HepG2 (cell line): ENCODE measurements at regions of chr15 and their contacts with region 1.

Region 1: DNA sequence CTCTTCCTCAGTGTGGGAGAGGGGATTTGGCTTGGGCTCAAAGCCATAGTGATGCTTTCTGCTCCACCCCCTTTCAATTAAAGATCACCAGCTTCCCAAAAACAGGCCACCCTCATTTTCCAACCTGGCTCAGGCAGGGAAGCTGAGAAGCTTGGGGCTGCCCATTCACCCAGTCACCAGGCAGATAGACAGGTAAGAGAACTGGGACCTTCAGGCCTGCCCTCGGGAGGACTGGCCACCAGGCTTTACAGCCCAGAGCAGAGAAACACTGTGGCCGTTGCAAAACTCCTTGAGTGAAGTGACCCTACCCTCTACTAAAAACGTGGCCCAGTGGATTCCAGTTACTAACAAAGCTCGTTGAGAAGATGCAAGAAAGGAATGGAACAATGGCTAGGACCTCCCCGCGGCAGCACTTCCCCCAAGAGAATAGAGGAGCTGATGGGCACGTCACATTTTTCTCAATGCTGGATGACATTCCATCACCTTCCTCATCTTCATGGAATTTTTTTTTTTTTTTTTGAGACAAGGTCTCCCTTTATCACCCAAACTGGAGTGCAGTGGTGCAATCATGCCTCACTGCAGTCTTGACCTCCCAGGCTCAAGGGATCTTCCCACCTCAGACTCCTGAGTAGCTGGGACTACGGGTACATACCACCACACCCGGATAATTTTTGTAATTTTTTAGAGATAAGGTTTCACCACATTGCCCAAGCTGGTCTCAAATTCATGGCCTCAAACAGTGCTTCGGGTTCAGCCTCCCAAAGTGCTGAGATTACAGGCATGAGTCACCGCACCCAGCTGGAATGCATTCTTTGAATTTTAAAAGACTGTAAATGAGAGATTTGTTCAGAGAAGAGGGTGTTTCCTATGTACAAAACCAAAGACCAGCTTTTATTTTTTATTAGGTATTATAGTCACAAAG is 37.9 kb downstream of the LIPC start:
- DNase-seq: peak; percentile 90
- ATAC-seq: peak; percentile 39
- H3K4me3 ChIP-seq: peak overlapping the region in 1 of 3 experiments; percentile 13; a peak in 2 of 6 replicates
- H3K27ac ChIP-seq: peak overlapping the region; percentile 78
- H3K4me1 ChIP-seq: peaks cover 94% of the 10 kb centered on the region
- H3K27me3 ChIP-seq: no peaks in the 10 kb centered on the region
- CTCF ChIP-seq: no peak
- EP300 ChIP-seq: peak in 1 of 2 experiments; percentile 71; a peak in 2 of 4 replicates
- POLR2A ChIP-seq: no peak
- RAD21 ChIP-seq: no peak

Region 2: DNA sequence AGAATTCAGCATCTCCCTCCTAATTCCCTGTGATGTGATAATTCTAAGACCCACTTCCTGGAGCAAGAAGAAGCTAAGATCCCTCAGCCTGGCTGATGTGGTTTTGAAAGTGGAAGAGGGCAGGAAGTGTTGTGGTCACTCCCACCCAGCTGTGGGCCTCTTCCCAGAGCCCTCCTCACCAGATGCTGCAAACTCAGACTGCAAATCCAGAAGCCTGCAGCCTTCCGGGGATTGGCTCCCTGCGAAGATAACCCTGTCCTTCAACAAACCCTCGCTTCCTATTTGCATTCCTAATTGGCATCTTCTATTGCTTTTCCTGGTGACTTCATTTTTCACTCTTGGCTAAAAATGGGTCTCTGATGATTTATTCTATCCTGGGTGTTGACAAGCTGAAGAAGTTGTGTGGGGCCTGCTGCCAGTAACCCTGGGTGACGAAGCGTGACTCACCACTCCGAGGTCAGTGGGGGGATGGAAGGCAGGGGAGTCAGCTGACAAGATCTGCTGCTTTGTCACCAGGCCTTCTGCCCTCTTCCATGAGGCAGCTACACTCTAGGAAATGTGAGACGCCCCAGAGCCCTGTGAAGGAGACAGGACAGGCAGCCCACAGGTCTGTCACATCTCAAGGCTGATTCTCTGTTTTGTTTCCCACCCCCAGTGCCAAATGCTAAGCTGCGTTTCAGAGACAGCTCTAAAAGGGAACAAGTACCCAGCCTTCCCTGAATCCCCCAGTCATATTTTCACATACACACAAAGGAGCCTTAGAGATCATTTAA is 137.6 kb before region 1 on chr15:
- CTCF ChIA-PET with region 1: no interaction called
- POLR2A ChIA-PET with region 1: interaction called, 38 read pairs
- in situ Hi-C with region 1: no loop called
- intact Hi-C with region 1: no loop called
- DNase-seq: peak; percentile 92
- ATAC-seq: peak; percentile 85
- H3K4me3 ChIP-seq: peak overlapping the region; percentile 26 to 67 (median 48)
- H3K27ac ChIP-seq: peak overlapping the region; percentile 74
- H3K4me1 ChIP-seq: peaks cover 50% of the 10 kb centered on the region
- H3K27me3 ChIP-seq: no peaks in the 10 kb centered on the region; a peak in 1 of 5 replicates
- CTCF ChIP-seq: no peak
- EP300 ChIP-seq: peak in 1 of 2 experiments; percentile 85; a peak in 2 of 4 replicates
- POLR2A ChIP-seq: peak; percentile 65 to 91
- RAD21 ChIP-seq: no peak

Region 3: GRCh38 chr15:58438956-58439355 is 30.7 kb before region 1 on chr15:
- CTCF ChIA-PET with region 1: no interaction called
- POLR2A ChIA-PET with region 1: interaction called, 12 read pairs
- in situ Hi-C with region 1: no loop called
- intact Hi-C with region 1: no loop called
- DNase-seq: peak; percentile 77
- ATAC-seq: peak; percentile 89
- H3K4me3 ChIP-seq: no peak overlapping the region
- H3K27ac ChIP-seq: no peak overlapping the region
- H3K4me1 ChIP-seq: peaks cover 75% of the 10 kb centered on the region
- H3K27me3 ChIP-seq: no peaks in the 10 kb centered on the region
- CTCF ChIP-seq: peak; percentile 67
- EP300 ChIP-seq: no peak
- POLR2A ChIP-seq: no peak
- RAD21 ChIP-seq: peak; percentile 68

Region 4: DNA sequence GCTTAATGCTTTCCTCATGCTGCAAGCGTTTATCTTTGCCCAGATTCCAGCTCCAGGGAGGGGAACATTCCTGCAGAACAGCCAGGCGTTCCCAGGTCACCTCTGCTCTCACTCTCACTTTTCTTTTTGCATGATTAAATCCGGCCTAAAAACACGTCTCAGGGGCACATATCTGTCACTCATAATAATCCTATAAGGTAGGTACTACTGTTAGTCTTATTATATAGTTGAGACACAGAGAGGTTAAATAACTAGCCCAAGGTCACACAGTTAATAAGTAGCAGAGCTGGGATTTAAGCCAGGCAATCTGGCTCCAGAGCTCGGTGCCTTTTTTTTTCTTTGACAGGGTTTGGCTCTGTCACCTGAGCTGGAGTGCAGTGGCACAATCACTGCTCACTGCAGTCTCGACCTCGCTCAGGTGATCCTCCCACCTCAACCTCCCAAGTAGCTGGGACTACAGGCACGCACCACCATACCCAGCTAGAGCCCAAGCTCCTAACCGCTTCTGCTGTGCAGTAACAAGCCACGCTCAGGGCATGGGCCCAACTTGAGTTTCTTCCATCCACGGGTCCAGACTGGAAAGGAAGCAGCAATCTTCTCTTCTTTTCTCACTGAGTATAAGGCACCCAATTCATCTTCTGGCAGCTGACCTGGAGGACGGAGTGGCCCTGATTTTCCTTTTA is 58.6 kb after region 1 on chr15:
- CTCF ChIA-PET with region 1: no interaction called
- POLR2A ChIA-PET with region 1: interaction called, 34 read pairs
- in situ Hi-C with region 1: loop called (anchors 10 kb)
- intact Hi-C with region 1: loop called (anchors 5 kb)
- DNase-seq: peak; percentile 89
- ATAC-seq: peak; percentile 92
- H3K4me3 ChIP-seq: peak overlapping the region in 1 of 3 experiments; percentile 47; a peak in 1 of 6 replicates
- H3K27ac ChIP-seq: peak overlapping the region; percentile 78
- H3K4me1 ChIP-seq: peaks cover 61% of the 10 kb centered on the region
- H3K27me3 ChIP-seq: no peaks in the 10 kb centered on the region
- CTCF ChIP-seq: no peak
- EP300 ChIP-seq: peak in 1 of 2 experiments; percentile 61; a peak in 1 of 4 replicates
- POLR2A ChIP-seq: no peak
- RAD21 ChIP-seq: no peak; the same call in 1 of the 2 replicates

Region 5: DNA sequence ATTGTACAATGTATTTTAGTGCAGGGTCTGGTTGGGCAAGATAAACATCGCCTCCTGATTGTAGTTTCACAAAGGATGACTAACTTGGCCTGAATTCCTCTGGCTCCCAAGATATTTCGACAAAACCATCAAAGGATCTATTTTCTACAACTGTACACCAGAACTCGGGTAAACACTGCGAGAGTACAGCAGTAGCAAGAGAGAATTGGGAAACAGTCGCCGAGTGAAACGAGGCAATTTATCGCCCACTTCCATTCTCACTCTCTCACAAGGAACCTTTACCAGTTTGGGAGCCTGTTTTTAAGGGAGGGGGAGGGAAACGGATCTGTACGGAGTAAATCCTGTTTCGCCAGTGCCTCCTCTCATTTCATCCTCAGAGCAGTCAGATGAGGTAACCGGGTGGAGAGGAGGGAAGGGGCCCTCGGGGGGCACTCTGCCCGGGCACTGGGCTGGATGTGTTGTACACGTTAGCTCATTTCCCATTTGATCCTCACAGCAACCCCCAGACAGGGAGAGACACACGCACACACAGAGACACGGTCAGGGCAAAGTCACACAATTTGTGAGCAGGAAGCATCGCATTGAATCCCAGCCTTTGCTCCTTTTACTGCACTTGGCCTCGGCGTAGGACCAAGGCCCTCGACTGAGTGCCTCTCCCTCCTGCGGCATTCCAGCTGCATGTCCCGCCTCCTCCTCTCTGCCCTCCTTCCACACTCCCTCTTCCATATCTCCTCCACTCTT is 82.2 kb after region 1 on chr15:
- CTCF ChIA-PET with region 1: no interaction called
- POLR2A ChIA-PET with region 1: interaction called, 14 read pairs
- in situ Hi-C with region 1: loop called (anchors 5 kb)
- intact Hi-C with region 1: no loop called
- DNase-seq: peak; percentile 94
- ATAC-seq: peak; percentile 77
- H3K4me3 ChIP-seq: peak overlapping the region; percentile 7 to 59 (median 19)
- H3K27ac ChIP-seq: peak overlapping the region; percentile 74
- H3K4me1 ChIP-seq: peaks cover 41% of the 10 kb centered on the region
- H3K27me3 ChIP-seq: no peaks in the 10 kb centered on the region
- CTCF ChIP-seq: no peak
- EP300 ChIP-seq: peak in 1 of 2 experiments; percentile 64; a peak in 2 of 4 replicates
- POLR2A ChIP-seq: no peak
- RAD21 ChIP-seq: 0 out of 2 replicates have a peak, but pooled peaks have one; percentile 17

Region 6: GRCh38 chr15:58770857-58771620 is 301.3 kb after region 1 on chr15 and contains the start of gene MINDY2:
- CTCF ChIA-PET with region 1: no interaction called
- POLR2A ChIA-PET with region 1: interaction called, 21 read pairs
- in situ Hi-C with region 1: no loop called
- intact Hi-C with region 1: no loop called
- DNase-seq: peak; percentile 96
- ATAC-seq: peak; percentile 96
- H3K4me3 ChIP-seq: peak within 1 kb of the TSS; percentile 81 to 94 (median 94)
- H3K27ac ChIP-seq: peak within 1 kb of the TSS; percentile 89
- H3K4me1 ChIP-seq: peaks cover 40% of the 10 kb centered on the region
- H3K27me3 ChIP-seq: no peaks in the 10 kb centered on the region; a peak in 1 of 5 replicates
- CTCF ChIP-seq: peak; percentile 74
- EP300 ChIP-seq: peak in 1 of 2 experiments; percentile 41; a peak in 1 of 4 replicates
- POLR2A ChIP-seq: peak; percentile 81 to 83; a peak in 3 of 4 replicates
- RAD21 ChIP-seq: no peak; the same call in 1 of the 2 replicates
- total RNA-seq, gene MINDY2: 12.6 and 15.6 TPM in 2 replicates

Region 7: DNA sequence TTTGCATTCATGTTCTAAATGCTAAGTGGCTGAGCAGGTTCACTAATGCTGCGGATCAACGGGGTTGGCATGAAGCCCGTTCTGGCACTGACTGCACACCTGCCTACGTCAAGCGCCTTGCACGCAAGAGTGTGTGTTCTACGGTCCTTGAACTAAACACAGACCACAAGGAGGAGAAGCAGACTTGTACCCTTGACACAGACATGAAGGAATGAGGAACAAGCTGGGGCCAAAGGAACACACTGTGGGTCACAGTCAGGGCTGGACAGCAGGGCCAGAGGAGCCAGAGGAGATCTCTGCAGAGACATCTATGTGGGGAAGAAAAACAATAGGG is 689.0 kb after region 1 on chr15:
- CTCF ChIA-PET with region 1: no interaction called
- POLR2A ChIA-PET with region 1: no interaction called
- in situ Hi-C with region 1: no loop called
- intact Hi-C with region 1: no loop called
- DNase-seq: no peak
- ATAC-seq: no peak
- H3K4me3 ChIP-seq: no peak overlapping the region
- H3K27ac ChIP-seq: no peak overlapping the region
- H3K4me1 ChIP-seq: no peaks in the 10 kb centered on the region
- H3K27me3 ChIP-seq: no peaks in the 10 kb centered on the region
- CTCF ChIP-seq: no peak
- EP300 ChIP-seq: no peak
- POLR2A ChIP-seq: no peak
- RAD21 ChIP-seq: no peak